Aorta (tissue), 5 donors: ENCODE measurements at regions of chr4 and their contacts with region 1.

Region 1: GRCh38 chr4:178215763-178216162 is 773.5 kb upstream of the AGA start:
- DNase-seq: no peak
- ATAC-seq: no peak
- H3K4me3 ChIP-seq: no peak overlapping the region
- H3K27ac ChIP-seq: no peak overlapping the region
- H3K4me1 ChIP-seq: no peaks in the 10 kb centered on the region
- H3K27me3 ChIP-seq: no peaks in the 10 kb centered on the region

Region 2: GRCh38 chr4:177769155-177769554 is 446.6 kb before region 1 on chr4:
- intact Hi-C with region 1: loop called in 1 of 2 experiments (anchors 5 kb)
- DNase-seq: no peak
- ATAC-seq: no peak
- H3K4me3 ChIP-seq: no peak overlapping the region
- H3K27ac ChIP-seq: no peak overlapping the region
- H3K4me1 ChIP-seq: no peaks in the 10 kb centered on the region
- H3K27me3 ChIP-seq: no peaks in the 10 kb centered on the region

Region 3: DNA sequence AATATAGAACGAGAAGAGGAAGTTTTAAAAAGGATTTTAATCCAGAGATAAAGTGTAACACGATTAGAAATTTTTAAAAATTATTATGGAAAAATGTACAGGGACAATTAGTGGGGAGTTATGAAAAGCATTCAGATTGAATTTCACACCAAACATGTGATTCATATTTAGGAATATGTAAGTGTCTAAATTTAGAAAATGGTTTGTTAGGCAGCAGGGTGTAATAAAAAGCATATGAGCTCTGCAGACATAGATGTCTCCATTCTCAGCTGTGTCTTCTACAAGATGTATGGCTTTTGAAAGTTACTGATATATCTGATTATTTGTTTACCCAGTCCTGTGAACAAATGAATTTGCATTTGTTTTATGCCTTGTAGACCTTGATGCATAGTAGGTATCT is 134.6 kb before region 1 on chr4:
- intact Hi-C with region 1: no loop called
- DNase-seq: no peak
- ATAC-seq: no peak
- H3K4me3 ChIP-seq: no peak overlapping the region
- H3K27ac ChIP-seq: no peak overlapping the region
- H3K4me1 ChIP-seq: no peaks in the 10 kb centered on the region
- H3K27me3 ChIP-seq: no peaks in the 10 kb centered on the region

Region 4: DNA sequence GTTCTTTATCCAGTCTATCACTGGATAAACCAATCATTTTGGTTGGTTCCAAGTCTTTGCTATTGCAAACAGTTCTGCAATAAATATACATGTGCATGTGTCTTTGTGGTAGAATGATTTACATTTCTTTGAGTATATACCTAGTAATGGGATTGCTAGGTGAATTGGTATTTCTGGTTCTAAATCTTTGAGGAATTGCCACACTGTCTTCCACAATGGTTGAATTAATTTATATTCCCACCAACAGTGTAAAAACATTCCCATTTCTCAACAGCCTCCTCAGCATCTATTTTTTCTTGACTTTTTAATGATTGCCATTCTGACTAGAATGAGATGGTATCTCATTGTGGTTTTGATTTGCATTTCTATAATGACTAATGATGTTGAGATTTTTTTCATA is 18.1 kb after region 1 on chr4:
- intact Hi-C with region 1: no loop called
- DNase-seq: no peak
- ATAC-seq: no peak
- H3K4me3 ChIP-seq: no peak overlapping the region
- H3K27ac ChIP-seq: no peak overlapping the region
- H3K4me1 ChIP-seq: no peaks in the 10 kb centered on the region
- H3K27me3 ChIP-seq: no peaks in the 10 kb centered on the region

Region 5: DNA sequence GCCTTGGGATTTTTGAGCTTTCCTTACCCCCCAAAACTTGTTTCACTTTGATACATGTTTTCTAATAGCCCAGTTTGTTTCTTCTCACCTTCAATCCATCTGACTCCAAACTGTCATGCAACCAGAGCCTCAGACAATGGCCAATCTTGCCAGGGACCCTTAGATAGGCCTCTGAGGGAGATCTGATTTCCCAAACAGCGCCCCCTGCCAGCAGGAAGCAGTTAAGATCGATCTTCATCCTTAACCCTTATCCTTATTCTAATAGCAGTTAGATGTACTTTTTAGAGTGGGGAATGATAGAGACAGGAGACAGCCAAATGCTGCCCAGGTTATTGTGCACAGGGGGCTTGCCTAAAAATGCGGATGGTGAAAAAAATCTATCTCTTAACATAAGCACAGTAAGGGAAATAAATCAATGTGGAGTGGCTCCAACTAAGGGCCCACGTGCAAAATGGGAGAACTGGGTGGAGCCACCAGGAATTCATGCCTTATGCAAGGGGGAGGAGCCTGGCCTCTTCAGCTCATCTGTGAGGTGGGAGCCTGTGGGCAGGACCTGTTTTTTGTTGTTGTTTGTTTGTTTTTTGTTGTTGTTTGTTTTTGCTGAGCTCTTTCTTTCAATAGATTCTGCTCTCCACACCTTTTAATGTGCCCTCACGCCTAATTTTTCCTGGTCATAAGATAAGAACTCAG is 60.1 kb after region 1 on chr4:
- intact Hi-C with region 1: no loop called
- DNase-seq: no peak
- ATAC-seq: no peak
- H3K4me3 ChIP-seq: no peak overlapping the region
- H3K27ac ChIP-seq: no peak overlapping the region
- H3K4me1 ChIP-seq: no peaks in the 10 kb centered on the region
- H3K27me3 ChIP-seq: no peaks in the 10 kb centered on the region